Mammary epithelial cell (primary cell): ENCODE measurements at regions of chr2 and their contacts with region 1.

Region 1: DNA sequence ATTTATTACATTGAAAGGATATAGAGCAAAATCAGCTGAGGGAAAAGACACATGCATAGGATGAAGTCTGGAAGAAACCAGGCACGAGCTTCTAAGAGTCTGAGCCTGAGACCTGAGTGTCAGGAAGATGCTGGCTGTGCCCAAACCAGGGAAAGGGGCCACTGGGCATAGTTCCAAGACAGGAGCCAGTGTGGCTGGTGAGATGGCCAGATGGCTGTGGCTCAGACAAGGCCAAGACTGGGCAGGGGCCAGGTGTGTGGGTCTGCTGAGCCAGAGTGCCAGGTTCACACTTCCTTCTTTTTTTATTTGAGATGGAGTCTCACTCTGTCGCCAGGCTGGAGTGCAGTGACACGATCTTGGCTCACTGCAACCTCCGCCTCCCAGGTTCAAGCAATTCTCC is 95.5 kb upstream of the ATG16L1 start:
- DNase-seq: no peak
- H3K4me3 ChIP-seq: no peak overlapping the region
- H3K27ac ChIP-seq: no peak overlapping the region
- H3K4me1 ChIP-seq: no peaks in the 10 kb centered on the region
- H3K27me3 ChIP-seq: no peaks in the 10 kb centered on the region
- CTCF ChIP-seq: no peak

Region 2: DNA sequence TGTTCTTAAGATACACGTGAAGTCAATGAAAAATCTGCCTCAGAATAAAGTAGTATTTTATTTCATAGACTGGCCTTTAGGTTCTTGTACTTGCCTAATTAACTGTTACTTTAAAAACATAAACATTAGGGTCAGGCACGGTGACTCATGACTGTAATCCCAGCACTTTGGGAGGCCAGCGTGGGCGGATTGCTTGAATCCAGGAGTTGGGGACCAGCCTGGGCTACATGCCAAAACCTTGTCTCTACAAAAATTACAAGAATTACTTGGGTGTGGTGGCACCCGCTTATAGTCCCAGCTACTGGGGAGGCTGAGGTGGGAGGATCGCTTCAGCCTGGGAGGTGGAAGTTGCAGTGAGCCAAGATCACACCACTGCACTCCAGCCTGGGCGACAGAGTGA is 301.9 kb before region 1 on chr2:
- CTCF ChIA-PET with region 1: no interaction called
- dilution Hi-C with region 1: no loop called
- in situ Hi-C with region 1: no loop called
- intact Hi-C with region 1: loop called (anchors 5 kb)
- DNase-seq: peak; percentile 77
- H3K4me3 ChIP-seq: no peak overlapping the region
- H3K27ac ChIP-seq: no peak overlapping the region
- H3K4me1 ChIP-seq: peaks cover 15% of the 10 kb centered on the region
- H3K27me3 ChIP-seq: no peaks in the 10 kb centered on the region
- CTCF ChIP-seq: no peak

Region 3: GRCh38 chr2:233185963-233186362 is 30.0 kb after region 1 on chr2:
- CTCF ChIA-PET with region 1: no interaction called
- dilution Hi-C with region 1: no loop called
- in situ Hi-C with region 1: no loop called
- intact Hi-C with region 1: no loop called
- DNase-seq: no peak
- H3K4me3 ChIP-seq: no peak overlapping the region
- H3K27ac ChIP-seq: no peak overlapping the region
- H3K4me1 ChIP-seq: peaks cover 17% of the 10 kb centered on the region
- H3K27me3 ChIP-seq: no peaks in the 10 kb centered on the region
- CTCF ChIP-seq: no peak